ENCODE measurements at regions of chr11 and their contacts with region 1.

Region 1: DNA sequence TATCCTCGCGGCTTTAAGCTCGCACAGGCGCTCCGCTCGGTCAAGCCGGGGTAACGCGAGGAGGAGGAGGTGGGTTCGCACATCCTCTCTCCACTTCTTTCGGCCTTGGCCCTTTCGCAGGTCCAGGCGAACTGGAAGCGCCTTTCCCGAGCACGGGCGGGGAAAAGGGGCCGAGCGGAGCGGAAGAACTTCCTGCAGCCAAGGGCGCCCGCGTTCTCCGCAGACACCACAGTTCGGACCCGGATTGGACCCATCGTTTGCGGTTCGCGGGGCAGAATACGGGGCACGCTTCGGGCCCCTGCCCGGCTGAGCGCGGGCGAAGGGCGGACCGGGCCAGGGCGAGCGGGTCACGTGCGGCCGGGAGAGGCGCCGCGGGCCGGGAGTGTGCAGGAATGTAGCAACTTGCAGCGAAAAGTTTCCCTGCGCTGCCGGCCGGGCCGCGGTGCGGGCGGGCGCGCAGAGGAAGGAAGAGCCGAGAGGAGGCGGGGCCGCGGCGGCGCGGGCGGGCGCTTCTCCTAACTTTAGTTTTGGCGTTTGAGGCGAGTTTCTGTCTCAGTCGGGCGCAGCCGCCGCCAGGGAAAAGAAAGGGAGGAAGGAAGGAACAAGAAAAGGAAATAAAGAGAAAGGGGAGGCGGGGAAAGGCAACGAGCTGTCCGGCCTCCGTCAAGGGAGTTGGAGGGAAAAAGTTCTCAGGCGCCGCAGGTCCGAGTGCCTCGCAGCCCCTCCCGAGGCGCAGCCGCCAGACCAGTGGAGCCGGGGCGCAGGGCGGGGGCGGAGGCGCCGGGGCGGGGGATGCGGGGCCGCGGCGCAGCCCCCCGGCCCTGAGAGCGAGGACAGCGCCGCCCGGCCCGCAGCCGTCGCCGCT is at the start of gene YAP1:
- DNase-seq: peak; percentile 92
- H3K4me3 Mint-ChIP-seq: peak within 1 kb of the TSS; percentile 92
- H3K27ac Mint-ChIP-seq: peak within 1 kb of the TSS; percentile 98
- H3K4me1 Mint-ChIP-seq: peaks cover 15% of the 10 kb centered on the region
- H3K27me3 Mint-ChIP-seq: no peaks in the 10 kb centered on the region
- CTCF ChIP-seq: no peak
- total RNA-seq, gene YAP1: 139 and 158 TPM in 2 replicates

Region 2: DNA sequence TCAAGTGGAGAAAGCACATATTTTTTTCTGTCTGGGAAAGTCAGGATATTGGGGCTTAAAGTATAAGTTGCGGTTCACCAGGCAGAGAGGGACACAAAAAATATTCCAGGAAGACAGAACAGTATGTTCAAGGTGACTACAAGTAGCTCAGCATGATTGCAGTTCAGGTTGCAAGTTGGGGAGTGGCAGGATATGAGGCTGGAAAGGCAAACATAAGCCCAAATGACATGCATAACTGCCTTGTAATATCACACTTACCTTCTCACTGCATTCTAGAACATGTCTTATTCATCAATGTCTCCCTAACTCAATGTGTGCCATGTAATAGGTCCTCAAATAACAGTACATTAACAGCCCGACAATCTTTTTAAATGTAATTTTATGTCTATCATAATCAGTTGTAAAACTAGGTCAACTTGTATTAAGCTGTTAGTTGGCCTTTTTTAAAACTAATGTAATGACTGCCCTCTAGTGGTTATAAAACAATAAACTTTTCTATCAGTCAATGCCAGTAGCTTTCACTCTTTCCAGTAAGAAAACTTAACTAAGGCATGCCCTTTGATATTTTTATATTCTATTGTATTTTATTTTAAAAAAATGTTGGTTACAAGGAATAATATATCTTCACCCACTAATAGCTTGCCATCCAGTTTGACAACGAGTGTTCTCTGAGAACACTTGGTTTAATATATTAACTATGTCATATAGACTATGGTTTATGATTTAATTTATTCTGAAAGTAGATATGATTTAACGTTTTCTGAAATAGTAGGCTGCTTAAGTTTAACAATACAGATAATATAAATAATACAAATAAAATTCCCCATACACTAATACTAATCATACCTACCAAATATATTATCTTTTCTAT is 102.3 kb before region 1 on chr11:
- CTCF ChIA-PET with region 1: interaction called, 3 read pairs
- POLR2A ChIA-PET with region 1: interaction called, 10 read pairs
- intact Hi-C with region 1: loop called (anchors 2 kb)
- DNase-seq: peak; percentile 70
- H3K4me3 Mint-ChIP-seq: no peak overlapping the region
- H3K27ac Mint-ChIP-seq: peak overlapping the region; percentile 90
- H3K4me1 Mint-ChIP-seq: peaks cover 31% of the 10 kb centered on the region
- H3K27me3 Mint-ChIP-seq: no peaks in the 10 kb centered on the region
- CTCF ChIP-seq: peak; percentile 44

Region 3: GRCh38 chr11:102139081-102139498 is 29.0 kb after region 1 on chr11:
- CTCF ChIA-PET with region 1: interaction called, 4 read pairs
- POLR2A ChIA-PET with region 1: interaction called, 8 read pairs
- intact Hi-C with region 1: loop called (anchors 2 kb)
- DNase-seq: peak; percentile 72
- H3K4me3 Mint-ChIP-seq: peak overlapping the region; percentile 55
- H3K27ac Mint-ChIP-seq: peak overlapping the region; percentile 91
- H3K4me1 Mint-ChIP-seq: peaks cover 30% of the 10 kb centered on the region
- H3K27me3 Mint-ChIP-seq: no peaks in the 10 kb centered on the region
- CTCF ChIP-seq: no peak

Region 4: GRCh38 chr11:102171101-102171500 is 61.0 kb after region 1 on chr11:
- CTCF ChIA-PET with region 1: no interaction called
- POLR2A ChIA-PET with region 1: interaction called, 8 read pairs
- intact Hi-C with region 1: loop called (anchors 2 kb)
- DNase-seq: peak; percentile 64
- H3K4me3 Mint-ChIP-seq: no peak overlapping the region
- H3K27ac Mint-ChIP-seq: peak overlapping the region; percentile 76
- H3K4me1 Mint-ChIP-seq: peaks cover 34% of the 10 kb centered on the region
- H3K27me3 Mint-ChIP-seq: no peaks in the 10 kb centered on the region
- CTCF ChIP-seq: no peak

Region 5: GRCh38 chr11:102225689-102226568 is 115.8 kb after region 1 on chr11:
- CTCF ChIA-PET with region 1: interaction called, 3 read pairs
- POLR2A ChIA-PET with region 1: interaction called, 14 read pairs
- intact Hi-C with region 1: loop called (anchors 2 kb)
- DNase-seq: peak; percentile 71
- H3K4me3 Mint-ChIP-seq: peak overlapping the region; percentile 48
- H3K27ac Mint-ChIP-seq: peak overlapping the region; percentile 87
- H3K4me1 Mint-ChIP-seq: peaks cover 46% of the 10 kb centered on the region
- H3K27me3 Mint-ChIP-seq: no peaks in the 10 kb centered on the region
- CTCF ChIP-seq: no peak